ENCODE measurements at regions of chr1 and their contacts with region 1.

Region 1: GRCh38 chr1:26156704-26157038 is 2.2 kb upstream of the FAM110D start:
- ATAC-seq: peak in 3 of 8 experiments; percentile 1 to 50 (median 2)
- H3K4me3 ChIP-seq: no peak overlapping the region
- H3K27ac ChIP-seq: no peak overlapping the region
- H3K4me1 ChIP-seq: peaks cover 47 to 62% of the 10 kb centered on the region in 2 donors

Region 2: GRCh38 chr1:26102526-26102925 is 54.1 kb before region 1 on chr1:
- in situ Hi-C with region 1: loop called in 2 of 9 experiments (anchors 10 kb)
- ATAC-seq: no peak
- H3K4me3 ChIP-seq: no peak overlapping the region
- H3K27ac ChIP-seq: no peak overlapping the region
- H3K4me1 ChIP-seq: peaks cover 3 to 4% of the 10 kb centered on the region in 2 donors

Measured in motor neuron (in vitro differentiated cells).